ENCODE measurements at regions of chr22 and their contacts with region 1.

Region 1: DNA sequence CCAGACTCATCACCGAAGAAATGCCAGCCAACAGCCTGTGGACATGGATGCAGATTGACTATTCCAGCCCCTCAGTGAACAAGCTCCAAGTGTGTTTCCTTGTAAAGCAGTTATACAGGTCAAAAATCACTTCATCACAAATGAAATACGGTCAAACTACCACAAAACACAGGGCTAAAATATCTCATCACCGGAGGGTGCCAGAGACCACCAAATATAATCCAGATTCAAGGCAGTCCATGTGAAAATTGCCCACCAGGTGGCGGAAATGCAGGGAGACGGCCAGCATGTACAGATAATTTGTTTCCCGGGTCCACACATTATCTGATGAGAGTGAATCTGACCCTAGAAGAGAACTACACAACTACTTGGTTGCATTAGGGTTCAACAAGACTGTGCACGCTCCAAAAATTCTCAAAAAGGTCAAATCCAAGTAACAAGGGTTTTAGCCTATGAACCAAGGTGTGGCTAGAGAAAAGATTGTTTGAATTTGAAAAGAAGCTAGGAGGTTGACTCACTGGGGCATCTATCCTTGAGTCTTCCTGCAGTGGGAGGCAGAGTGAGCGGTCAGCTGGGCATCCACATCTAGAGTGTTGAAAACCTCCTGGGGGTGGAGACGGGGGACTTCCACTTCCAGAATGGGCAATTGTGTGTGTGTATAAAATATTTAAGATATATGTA is 71.7 kb downstream of the IGLL5 start:
- DNase-seq: peak; percentile 48 to 89 (median 80)
- ATAC-seq: peak; percentile 60
- H3K4me3 ChIP-seq: no peak overlapping the region
- H3K4me3 Mint-ChIP-seq: no peak overlapping the region
- H3K27ac ChIP-seq: no peak overlapping the region
- H3K27ac Mint-ChIP-seq: no peak overlapping the region
- H3K4me1 ChIP-seq: no peaks in the 10 kb centered on the region
- H3K4me1 Mint-ChIP-seq: peaks cover 5% of the 10 kb centered on the region
- H3K27me3 ChIP-seq: no peaks in the 10 kb centered on the region
- H3K27me3 Mint-ChIP-seq: peaks cover 10% of the 10 kb centered on the region
- CTCF ChIP-seq: peak; percentile 98

Region 2: DNA sequence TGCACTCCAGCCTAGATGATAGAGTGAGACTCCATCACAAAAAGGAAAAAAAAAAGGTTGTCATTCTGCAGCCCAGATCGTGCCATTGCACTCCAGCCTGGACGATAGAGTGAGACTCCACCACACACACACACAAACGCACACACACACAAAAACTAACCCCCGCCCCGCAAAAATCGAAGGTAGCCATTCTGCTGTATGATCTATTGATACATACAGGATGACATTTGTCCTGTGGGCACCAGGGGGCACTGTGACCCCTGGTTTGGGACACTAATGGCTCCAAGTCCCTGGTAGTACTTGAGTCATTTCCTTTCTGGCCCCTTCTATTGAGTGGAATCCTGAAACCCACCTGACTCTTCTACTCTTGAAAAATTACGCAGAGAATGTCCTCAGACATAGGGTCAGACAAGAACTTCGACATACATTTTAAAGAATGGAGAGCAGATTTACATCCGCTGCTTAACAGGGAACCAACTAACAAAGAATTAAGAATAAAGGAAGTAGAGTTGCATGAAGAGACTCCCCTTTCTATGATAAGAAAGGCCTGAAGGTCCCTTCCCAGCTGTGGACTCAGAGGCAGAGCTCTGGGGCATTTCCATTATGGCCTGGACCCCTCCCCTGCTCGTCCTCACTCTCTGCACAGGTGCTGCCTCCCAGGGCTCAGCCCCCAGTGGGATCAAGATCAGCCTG is 365.2 kb before region 1 on chr22:
- CTCF ChIA-PET with region 1: interaction called, 119 read pairs
- POLR2A ChIA-PET with region 1: no interaction called
- intact Hi-C with region 1: loop called in 1 of 2 experiments (anchors 2 kb)
- DNase-seq: peak in 8 of 9 experiments; percentile 25 to 77 (median 48)
- ATAC-seq: peak; percentile 66
- H3K4me3 ChIP-seq: no peak overlapping the region
- H3K4me3 Mint-ChIP-seq: no peak overlapping the region
- H3K27ac ChIP-seq: no peak overlapping the region
- H3K27ac Mint-ChIP-seq: no peak overlapping the region
- H3K4me1 ChIP-seq: no peaks in the 10 kb centered on the region
- H3K4me1 Mint-ChIP-seq: peaks cover 4% of the 10 kb centered on the region
- H3K27me3 ChIP-seq: no peaks in the 10 kb centered on the region
- H3K27me3 Mint-ChIP-seq: peaks cover 7% of the 10 kb centered on the region
- CTCF ChIP-seq: peak; percentile 73

Region 3: GRCh38 chr22:22728382-22728781 is 230.9 kb before region 1 on chr22:
- CTCF ChIA-PET with region 1: no interaction called
- POLR2A ChIA-PET with region 1: no interaction called
- intact Hi-C with region 1: no loop called
- DNase-seq: peak in 1 of 9 experiments; percentile 34
- ATAC-seq: no peak
- H3K4me3 ChIP-seq: no peak overlapping the region
- H3K4me3 Mint-ChIP-seq: no peak overlapping the region
- H3K27ac ChIP-seq: no peak overlapping the region
- H3K27ac Mint-ChIP-seq: no peak overlapping the region
- H3K4me1 ChIP-seq: no peaks in the 10 kb centered on the region
- H3K4me1 Mint-ChIP-seq: peaks cover 24% of the 10 kb centered on the region
- H3K27me3 ChIP-seq: no peaks in the 10 kb centered on the region
- H3K27me3 Mint-ChIP-seq: peaks cover 3% of the 10 kb centered on the region
- CTCF ChIP-seq: no peak

Region 4: GRCh38 chr22:22748297-22748743 is 211.0 kb before region 1 on chr22:
- CTCF ChIA-PET with region 1: interaction called, 56 read pairs
- POLR2A ChIA-PET with region 1: no interaction called
- intact Hi-C with region 1: loop called in 1 of 2 experiments (anchors 1 kb)
- DNase-seq: peak in 5 of 9 experiments; percentile 22 to 77 (median 45)
- ATAC-seq: peak; percentile 52
- H3K4me3 ChIP-seq: no peak overlapping the region
- H3K4me3 Mint-ChIP-seq: no peak overlapping the region
- H3K27ac ChIP-seq: no peak overlapping the region
- H3K27ac Mint-ChIP-seq: peak overlapping the region; percentile 32
- H3K4me1 ChIP-seq: peaks cover 12% of the 10 kb centered on the region
- H3K4me1 Mint-ChIP-seq: peaks cover 35% of the 10 kb centered on the region
- H3K27me3 ChIP-seq: no peaks in the 10 kb centered on the region
- H3K27me3 Mint-ChIP-seq: peaks cover 8% of the 10 kb centered on the region
- CTCF ChIP-seq: peak; percentile 69

Region 5: GRCh38 chr22:22877523-22878210 is 81.6 kb before region 1 on chr22:
- CTCF ChIA-PET with region 1: interaction called, 30 read pairs
- POLR2A ChIA-PET with region 1: no interaction called
- intact Hi-C with region 1: loop called in 1 of 2 experiments (anchors 5 kb)
- DNase-seq: peak; percentile 56 to 91 (median 81)
- ATAC-seq: peak; percentile 59
- H3K4me3 ChIP-seq: no peak overlapping the region
- H3K4me3 Mint-ChIP-seq: no peak overlapping the region
- H3K27ac ChIP-seq: no peak overlapping the region
- H3K27ac Mint-ChIP-seq: peak overlapping the region; percentile 41
- H3K4me1 ChIP-seq: no peaks in the 10 kb centered on the region
- H3K4me1 Mint-ChIP-seq: peaks cover 7% of the 10 kb centered on the region
- H3K27me3 ChIP-seq: no peaks in the 10 kb centered on the region
- H3K27me3 Mint-ChIP-seq: no peaks in the 10 kb centered on the region
- CTCF ChIP-seq: peak; percentile 78

Region 6: DNA sequence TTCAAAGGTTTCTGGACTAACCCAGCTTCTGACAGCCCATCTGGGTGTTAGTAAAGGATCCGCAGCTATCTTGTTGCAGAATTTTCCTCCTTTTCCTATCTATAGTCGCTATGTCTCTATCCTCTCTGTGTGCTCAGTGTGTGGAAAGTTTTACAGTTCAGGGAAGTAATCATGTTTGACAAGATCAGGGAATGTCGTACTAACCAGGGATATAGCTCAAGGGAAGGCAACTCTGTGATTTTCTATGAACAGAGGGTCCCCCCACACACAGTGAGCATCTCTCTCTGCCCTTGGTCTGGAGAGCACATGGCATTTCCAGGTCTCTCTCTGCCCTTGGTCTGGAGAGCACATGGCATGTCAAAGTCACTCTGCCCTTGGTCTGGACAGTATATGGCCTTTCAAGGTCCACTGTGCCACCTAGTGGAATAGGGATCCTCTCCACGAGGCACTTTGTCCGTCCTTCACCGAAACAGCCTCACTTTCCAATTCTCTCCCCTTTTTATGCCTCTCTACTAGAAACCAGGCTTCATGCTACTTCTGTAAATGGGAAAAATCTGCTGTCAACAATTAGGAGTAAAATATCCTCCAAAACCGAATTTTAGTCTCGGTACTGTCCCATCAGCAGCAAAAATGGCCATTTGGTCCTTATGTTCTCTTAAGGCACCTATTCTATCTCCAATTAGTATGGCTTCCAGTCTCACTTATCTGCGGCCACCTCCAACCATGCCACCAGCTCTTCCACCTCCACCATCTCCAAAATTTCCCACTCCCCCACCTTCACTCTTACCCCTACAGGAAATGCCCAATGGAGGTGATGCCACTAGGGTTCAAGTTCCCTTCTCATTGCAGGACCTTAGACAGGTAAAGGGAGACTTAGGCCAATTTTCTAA is 17.0 kb after region 1 on chr22:
- CTCF ChIA-PET with region 1: interaction called, 31 read pairs
- POLR2A ChIA-PET with region 1: no interaction called
- intact Hi-C with region 1: no loop called
- DNase-seq: no peak
- ATAC-seq: no peak
- H3K4me3 ChIP-seq: no peak overlapping the region
- H3K4me3 Mint-ChIP-seq: no peak overlapping the region
- H3K27ac ChIP-seq: no peak overlapping the region
- H3K27ac Mint-ChIP-seq: no peak overlapping the region
- H3K4me1 ChIP-seq: no peaks in the 10 kb centered on the region
- H3K4me1 Mint-ChIP-seq: no peaks in the 10 kb centered on the region
- H3K27me3 ChIP-seq: no peaks in the 10 kb centered on the region
- H3K27me3 Mint-ChIP-seq: peaks cover 7% of the 10 kb centered on the region
- CTCF ChIP-seq: no peak

Region 7: DNA sequence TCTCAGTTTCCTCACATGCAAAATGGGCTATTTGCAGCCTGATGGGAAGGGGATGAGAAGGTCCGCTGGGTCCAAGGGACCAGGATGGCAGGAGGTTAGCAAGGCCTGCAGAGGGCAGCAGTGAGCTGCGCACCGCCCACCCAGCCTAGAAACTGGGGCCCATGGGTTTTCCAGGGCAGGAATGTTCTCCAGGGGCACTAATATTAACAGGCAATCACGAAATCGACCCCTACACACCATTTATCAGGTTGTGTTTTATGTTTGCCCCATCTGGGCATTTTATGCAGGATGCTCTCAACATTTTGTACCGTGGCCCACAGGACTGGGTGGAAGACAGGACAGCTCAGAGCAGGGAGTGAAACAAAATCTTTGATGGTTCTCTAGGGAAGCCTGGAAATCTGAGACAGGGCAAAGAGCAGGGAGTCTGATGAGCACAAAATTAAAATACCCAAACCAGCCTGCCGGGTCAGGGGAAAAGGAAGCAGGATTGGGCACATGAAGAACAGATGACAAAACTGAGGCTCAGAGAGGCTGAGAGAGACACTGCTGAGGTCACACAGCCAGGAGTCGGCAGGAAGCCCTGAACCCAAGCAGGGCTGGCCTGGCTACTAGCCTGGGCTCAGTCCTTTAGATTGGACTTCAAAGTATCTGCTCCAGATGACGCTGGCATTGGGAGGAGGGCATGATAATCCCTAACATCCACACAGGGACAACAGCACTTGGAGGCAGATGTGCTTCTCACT is 219.4 kb after region 1 on chr22:
- CTCF ChIA-PET with region 1: interaction called, 12 read pairs
- POLR2A ChIA-PET with region 1: no interaction called
- intact Hi-C with region 1: loop called in 1 of 2 experiments (anchors 1 kb)
- DNase-seq: peak; percentile 35 to 81 (median 70)
- ATAC-seq: peak; percentile 31
- H3K4me3 ChIP-seq: no peak overlapping the region
- H3K4me3 Mint-ChIP-seq: peak overlapping the region; percentile 82
- H3K27ac ChIP-seq: no peak overlapping the region
- H3K27ac Mint-ChIP-seq: peak overlapping the region; percentile 71
- H3K4me1 ChIP-seq: peaks cover 40% of the 10 kb centered on the region
- H3K4me1 Mint-ChIP-seq: peaks cover 46% of the 10 kb centered on the region
- H3K27me3 ChIP-seq: no peaks in the 10 kb centered on the region
- H3K27me3 Mint-ChIP-seq: no peaks in the 10 kb centered on the region
- CTCF ChIP-seq: peak; percentile 98

Measured in CD8-positive, alpha-beta T cell (primary cell).